Cardiac septum (tissue), 1 donor: ENCODE measurements at regions of chr11 and their contacts with region 1.

Region 1: DNA sequence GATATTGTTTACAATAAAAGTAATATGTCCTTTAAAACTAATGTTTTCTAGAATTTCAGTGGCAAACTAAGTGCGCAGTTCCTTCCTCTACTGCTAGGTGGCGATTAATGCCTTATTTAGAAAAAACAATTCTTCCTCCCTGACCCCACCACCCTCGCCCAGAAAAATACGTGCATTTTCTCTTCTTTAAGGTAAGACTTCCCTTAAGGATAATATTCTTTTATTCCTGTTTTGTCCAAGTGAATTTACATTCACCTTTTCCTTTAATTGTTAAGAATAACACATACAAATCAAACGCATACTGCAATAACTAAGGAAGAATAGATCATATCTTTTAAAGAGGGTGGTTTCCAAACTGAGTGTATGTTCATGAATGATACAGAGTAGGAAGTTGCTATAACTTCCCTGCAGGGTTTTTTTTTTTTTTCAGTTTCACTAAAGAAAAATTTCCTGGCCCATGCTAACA is 17.0 kb upstream of the PSMA1 start:
- DNase-seq: no peak

Region 2: DNA sequence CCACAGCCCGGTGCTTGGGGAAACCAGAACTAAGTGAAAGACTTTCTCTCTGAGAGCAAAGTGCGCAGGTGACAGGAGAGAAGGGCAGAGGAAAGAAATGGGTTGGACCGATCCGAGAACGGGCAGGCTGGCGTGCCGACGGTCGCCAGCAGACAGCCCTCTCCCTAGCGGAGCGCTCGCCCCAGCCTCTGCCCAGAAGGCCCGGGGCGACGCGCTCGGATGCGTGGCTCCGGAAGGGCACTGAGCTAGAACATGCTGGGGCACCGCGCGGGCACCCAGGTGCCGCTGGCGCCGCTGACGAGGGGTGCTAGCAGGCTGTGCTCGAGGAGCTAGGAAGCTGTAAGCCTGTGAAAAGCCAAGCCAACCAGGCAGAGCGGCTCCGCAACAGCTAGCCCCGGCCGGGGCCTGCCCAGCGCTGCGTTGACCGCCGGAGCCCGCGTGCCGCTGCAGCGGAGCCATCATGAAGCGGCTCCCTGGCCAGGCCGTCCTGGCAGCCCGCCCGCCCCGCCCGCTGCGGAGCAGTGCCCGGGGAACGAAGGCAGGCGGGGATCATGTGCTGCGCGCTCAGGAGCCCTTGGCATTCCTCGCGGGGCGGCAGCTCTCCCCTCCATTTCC is 156.1 kb before region 1 on chr11:
- intact Hi-C with region 1: no loop called
- DNase-seq: peak; percentile 89

Region 3: GRCh38 chr11:14643697-14644225 is 106.6 kb after region 1 on chr11 and contains the start of gene PDE3B:
- intact Hi-C with region 1: loop called (anchors 5 kb)
- DNase-seq: peak; percentile 94
- total RNA-seq, gene PDE3B: 8.7 TPM

Region 4: DNA sequence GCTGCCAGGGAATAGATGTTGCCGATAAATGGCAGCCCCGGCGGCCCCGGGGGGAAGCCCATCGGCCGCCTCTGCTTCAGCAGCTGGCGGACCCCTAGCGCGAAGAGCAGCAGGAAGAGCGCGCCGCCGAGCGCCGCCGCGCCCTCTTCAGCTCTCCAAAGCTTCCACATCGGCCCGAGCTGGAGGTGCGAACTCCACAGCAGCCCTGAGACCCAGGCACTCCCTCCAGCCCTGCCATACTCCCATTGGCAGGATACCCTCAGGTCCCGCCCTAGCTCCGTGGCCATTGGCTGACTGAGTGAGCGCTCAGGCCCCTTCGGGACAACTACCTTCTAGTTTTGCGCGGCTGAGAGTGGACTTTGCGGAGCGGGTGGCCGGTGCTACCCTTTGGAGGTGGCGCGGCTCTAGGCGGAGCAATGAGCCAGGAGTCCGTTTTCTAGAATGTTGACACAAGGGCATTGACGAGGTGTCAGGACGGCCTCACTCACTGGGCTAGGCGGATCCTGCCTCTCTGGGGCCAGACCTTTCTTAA is 354.9 kb after region 1 on chr11 and contains the start of gene CYP2R1:
- intact Hi-C with region 1: loop called (anchors 5 kb)
- DNase-seq: peak; percentile 98
- total RNA-seq, gene CYP2R1: 7.9 TPM

Region 5: GRCh38 chr11:14907411-14908213 is 370.4 kb after region 1 on chr11:
- intact Hi-C with region 1: loop called (anchors 5 kb)
- DNase-seq: peak; percentile 89

Region 6: DNA sequence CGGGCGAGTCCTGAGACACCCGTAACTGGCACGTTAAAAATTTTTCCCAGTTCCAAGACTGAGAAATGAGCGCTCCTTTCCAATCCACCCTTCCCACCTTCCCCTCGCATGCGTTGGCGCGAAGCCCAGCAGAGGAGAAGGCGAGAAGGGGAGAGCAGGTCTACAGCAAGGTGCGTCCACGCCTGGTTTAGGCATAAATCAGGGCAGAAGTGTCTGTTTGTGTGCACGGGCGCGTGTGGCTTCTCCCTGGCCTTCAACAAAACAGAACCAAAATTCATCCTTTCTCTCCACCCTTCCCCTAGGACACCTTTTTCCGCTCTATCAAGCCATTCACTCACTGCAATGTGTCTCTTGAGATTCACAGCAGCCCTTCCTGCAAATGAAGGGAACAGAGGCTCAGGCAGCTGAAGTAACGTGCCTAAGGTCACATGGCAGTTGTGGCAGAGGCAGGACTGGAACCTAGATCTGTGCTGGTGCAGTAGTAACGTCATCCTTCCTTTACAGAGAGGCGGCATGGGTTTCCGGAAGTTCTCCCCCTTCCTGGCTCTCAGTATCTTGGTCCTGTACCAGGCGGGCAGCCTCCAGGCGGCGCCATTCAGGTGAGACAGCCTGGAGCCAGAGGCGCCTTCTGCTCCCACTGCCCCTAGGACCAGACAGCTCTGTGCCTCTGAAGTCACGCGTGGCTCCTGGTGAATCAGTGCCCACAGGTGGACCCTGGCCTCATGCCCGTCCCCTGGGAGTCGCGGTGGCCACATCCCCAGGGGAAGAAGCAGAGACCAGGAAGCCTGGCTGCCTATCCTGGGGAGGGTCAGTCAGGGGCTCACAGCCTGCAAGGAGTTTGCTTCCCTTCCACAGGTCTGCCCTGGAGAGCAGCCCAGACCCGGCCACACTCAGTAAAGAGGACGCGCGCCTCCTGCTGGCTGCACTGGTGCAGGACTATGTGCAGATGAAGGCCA is 537.3 kb after region 1 on chr11:
- intact Hi-C with region 1: loop called (anchors 10 kb)
- DNase-seq: peak; percentile 81